Right lobe of liver (tissue), 6 donors: ENCODE measurements at regions of chr11 and their contacts with region 1.

Region 1: GRCh38 chr11:1694064-1694845 is 2.7 kb upstream of the KRTAP5-6 start:
- DNase-seq: peak; percentile 91 to 93 (median 92)
- ATAC-seq: peak; percentile 47 to 66 (median 61)
- H3K4me3 ChIP-seq: peak overlapping the region in 2 of 3 donors; percentile 26 to 48
- H3K27ac ChIP-seq: peak overlapping the region; percentile 45 to 90 (median 90)
- H3K4me1 ChIP-seq: peaks cover 0 to 39% (median 18%) of the 10 kb centered on the region in 4 donors
- H3K27me3 ChIP-seq: no peaks in the 10 kb centered on the region
- CTCF ChIP-seq: peak; percentile 95 to 97 (median 96)
- POLR2A ChIP-seq: no peak

Region 2: DNA sequence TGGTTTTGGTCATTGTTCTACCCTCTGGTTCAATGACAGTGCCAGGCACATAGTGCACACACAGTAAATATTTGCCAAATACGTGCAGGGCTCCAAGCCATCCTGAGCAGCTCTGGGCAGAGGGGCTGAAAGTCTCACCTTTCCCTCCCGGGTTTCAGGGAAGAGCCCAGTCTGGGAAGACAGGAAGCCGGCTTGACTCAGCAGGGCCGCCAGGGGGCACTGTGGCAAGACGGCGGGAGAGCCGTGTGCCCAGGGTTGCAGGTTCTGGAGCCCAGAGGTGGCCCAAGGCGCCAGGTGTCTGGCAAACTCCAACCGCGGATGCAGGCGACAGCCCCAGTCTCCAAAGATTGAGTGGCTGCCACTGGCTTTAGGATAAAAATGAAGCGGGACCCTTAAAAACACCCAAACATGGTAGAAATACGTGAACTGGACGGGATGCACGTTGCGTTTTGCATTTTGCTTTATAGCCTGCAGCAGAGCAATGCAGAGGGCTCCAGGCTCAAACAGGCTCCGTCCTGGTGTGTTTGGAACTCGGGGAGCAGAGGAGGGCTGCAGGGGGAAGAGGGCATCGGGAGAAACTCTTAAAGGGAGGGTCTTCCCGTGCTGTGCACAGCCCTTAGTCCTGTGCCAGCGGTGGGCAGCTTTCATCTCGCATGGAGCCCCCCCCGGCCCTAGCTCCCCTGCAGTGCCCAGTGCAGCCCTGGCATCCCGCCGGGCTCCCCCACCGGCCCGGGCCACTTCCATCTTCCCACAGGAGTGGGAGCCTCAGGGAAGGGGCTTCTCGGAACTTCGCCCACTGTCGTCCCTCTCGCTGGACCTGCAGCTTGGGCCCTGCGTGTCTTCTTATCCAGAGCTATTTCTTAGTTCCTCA is 53.9 kb before region 1 on chr11:
- intact Hi-C with region 1: no loop called
- DNase-seq: peak; percentile 55 to 68 (median 61)
- ATAC-seq: peak; percentile 84 to 92 (median 90)
- H3K4me3 ChIP-seq: no peak overlapping the region
- H3K27ac ChIP-seq: no peak overlapping the region
- H3K4me1 ChIP-seq: no peaks in the 10 kb centered on the region
- H3K27me3 ChIP-seq: no peaks in the 10 kb centered on the region
- CTCF ChIP-seq: peak; percentile 66 to 93 (median 88)
- POLR2A ChIP-seq: no peak

Region 3: DNA sequence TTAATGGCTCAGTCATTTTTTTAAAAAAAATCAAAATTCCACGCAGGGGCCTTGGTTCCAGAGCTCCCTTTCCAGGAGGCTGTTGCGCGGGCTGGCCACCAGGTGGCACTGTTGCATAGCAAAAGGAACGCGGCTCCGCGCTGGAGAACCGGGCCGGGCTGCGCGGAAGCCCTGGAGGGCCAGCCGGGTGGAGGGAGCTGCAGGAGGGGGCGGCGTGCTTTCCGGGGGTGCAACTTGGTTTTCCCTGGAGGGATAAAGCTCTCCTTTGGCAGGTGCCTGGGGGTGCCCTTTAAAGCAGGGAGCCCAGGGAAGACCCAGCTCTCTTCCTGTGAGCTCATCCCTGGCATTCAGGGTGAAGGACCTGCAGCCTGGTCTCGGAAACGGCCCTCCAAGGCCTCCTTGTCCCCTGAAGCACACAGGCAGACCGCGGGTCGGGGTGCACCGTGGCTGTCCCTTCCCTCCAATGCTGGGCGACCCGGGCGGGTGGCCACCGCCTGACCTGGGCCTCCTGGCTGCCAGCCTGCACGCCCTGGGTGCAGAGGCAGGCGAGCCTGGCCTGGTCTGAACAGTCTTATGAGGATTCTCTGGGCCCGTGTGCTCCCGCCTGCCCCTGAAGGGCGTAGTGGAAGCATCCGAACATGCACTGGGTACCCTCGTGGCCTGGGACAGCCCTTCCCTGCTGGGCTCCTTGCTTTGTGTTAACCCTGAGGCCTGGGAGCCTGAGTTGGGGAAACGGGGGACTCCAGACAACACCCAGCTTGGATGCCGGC is 41.3 kb before region 1 on chr11:
- intact Hi-C with region 1: loop called in 1 of 2 experiments (anchors 5 kb)
- DNase-seq: peak; percentile 82 to 85 (median 83)
- ATAC-seq: peak; percentile 68 to 86 (median 76)
- H3K4me3 ChIP-seq: peak overlapping the region in 1 of 3 donors; percentile 13
- H3K27ac ChIP-seq: peak overlapping the region; percentile 47 to 88 (median 49)
- H3K4me1 ChIP-seq: peaks cover 0 to 38% (median 22%) of the 10 kb centered on the region in 4 donors
- H3K27me3 ChIP-seq: no peaks in the 10 kb centered on the region
- CTCF ChIP-seq: peak; percentile 94 to 99 (median 98)
- POLR2A ChIP-seq: no peak

Region 4: DNA sequence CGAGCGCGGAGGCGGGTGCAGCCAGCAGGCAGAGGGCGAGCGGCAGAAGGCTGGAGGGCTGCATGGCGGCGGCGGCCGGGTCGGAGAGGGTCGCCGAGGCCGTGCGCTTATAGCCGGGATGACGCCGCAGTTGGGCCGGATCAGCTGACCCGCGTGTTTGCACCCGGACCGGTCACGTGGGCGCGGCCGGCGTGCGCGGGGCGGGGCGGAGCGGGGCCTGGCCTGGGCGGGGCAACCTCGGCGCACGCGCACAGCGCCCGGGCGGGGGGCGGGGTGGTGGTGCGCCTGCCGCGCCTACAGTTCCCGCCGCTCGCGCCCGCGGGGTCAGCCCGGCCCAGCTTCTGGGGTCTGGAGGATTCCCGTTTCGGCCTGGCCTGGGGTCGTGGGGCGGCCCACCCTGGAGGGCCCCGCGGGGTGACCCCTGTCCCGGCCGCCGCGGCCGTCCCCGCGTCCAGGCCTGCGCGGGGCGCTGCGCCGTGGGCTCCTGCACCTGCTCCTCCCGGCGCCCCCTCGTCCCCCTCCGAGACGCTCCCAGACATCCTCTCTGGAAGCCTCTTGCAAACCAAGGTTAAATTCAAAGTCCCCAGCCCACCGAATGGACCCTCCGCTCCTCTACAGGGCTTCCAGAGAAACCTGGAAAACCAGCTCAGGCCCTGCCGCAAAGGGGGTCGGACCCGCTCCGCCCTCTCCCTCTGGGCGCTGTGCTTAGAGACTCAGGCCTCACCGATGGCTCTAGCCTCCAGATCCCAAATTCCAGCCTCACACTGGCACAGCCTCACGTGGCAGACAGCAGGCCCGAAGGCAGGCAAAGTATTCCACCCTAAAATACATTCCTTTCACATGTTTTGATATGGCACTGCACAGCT is 69.8 kb after region 1 on chr11 and contains the start of gene CTSD:
- intact Hi-C with region 1: no loop called
- DNase-seq: peak; percentile 94 to 95 (median 94)
- ATAC-seq: peak; percentile 44 to 69 (median 63)
- H3K4me3 ChIP-seq: peak within 1 kb of the TSS; percentile 79 to 98 (median 97)
- H3K27ac ChIP-seq: peak within 1 kb of the TSS; percentile 82 to 99 (median 97)
- H3K4me1 ChIP-seq: peaks cover 0 to 37% (median 16%) of the 10 kb centered on the region in 4 donors
- H3K27me3 ChIP-seq: no peaks in the 10 kb centered on the region
- CTCF ChIP-seq: peak in 1 of 4 donors; percentile 4
- POLR2A ChIP-seq: peak; percentile 85
- total RNA-seq, gene CTSD: 515 to 1,549 (median 1,009) TPM

Region 5: GRCh38 chr11:1827095-1827813 is 133.0 kb after region 1 on chr11:
- intact Hi-C with region 1: loop called (anchors 2 to 5 kb)
- DNase-seq: peak in 2 of 3 donors; percentile 68 to 77
- ATAC-seq: peak; percentile 37 to 57 (median 48)
- H3K4me3 ChIP-seq: no peak overlapping the region
- H3K27ac ChIP-seq: peak overlapping the region in 1 of 3 donors; percentile 22
- H3K4me1 ChIP-seq: peaks cover 0 to 23% (median 9%) of the 10 kb centered on the region in 4 donors
- H3K27me3 ChIP-seq: no peaks in the 10 kb centered on the region
- CTCF ChIP-seq: peak in 1 of 4 donors; percentile 6
- POLR2A ChIP-seq: no peak

Region 6: GRCh38 chr11:1832211-1832919 is 138.1 kb after region 1 on chr11:
- intact Hi-C with region 1: loop called (anchors 2 to 5 kb)
- DNase-seq: peak in 2 of 3 donors; percentile 65 to 72
- ATAC-seq: peak; percentile 58 to 73 (median 66)
- H3K4me3 ChIP-seq: peak overlapping the region in 2 of 3 donors; percentile 19 to 31
- H3K27ac ChIP-seq: no peak overlapping the region
- H3K4me1 ChIP-seq: peaks cover 0 to 20% (median 7%) of the 10 kb centered on the region in 4 donors
- H3K27me3 ChIP-seq: no peaks in the 10 kb centered on the region
- CTCF ChIP-seq: peak; percentile 97 to 98 (median 98)
- POLR2A ChIP-seq: no peak

Region 7: DNA sequence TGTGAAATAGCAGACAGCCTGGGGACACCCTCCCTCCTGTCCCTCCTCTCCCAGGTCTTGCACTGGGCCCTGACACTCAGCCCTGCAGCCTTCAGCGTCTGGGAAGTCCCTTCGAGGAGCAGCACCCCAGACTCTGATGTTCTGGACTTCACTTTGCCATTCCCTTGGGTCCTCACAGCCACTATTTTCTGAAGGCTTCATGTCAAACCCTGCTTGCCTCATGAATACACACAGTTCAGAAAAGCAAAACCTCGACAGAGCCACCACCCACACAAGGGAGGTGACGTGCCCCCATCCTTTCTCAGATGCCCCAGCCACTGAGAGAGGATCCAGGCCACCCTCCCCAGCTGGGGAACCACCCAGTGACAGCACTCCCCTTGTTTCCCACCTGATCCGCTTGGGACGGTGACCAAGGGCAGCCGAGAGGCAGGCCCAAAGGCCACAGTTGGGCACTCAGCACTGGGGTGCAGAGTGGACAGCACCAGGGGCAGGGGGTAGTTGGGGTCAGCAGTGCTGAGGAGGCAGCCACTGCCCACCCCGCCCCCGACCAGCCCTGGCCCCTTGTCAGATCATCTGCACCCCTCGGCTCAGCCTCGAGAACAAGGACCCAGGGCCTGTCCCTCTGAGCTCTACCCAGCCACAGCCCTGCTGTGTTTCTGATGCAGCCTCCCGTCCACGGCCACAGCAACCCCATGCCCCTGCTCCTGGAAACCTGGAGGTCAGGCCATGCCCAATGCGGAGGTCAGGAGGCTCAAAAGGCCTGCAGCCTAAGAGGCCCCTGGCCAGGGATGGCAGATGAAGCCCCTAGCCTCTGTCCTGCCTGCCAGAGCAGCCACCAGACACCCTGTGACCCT is 222.1 kb after region 1 on chr11:
- intact Hi-C with region 1: no loop called
- DNase-seq: peak in 1 of 3 donors; percentile 42
- ATAC-seq: no peak
- H3K4me3 ChIP-seq: no peak overlapping the region
- H3K27ac ChIP-seq: no peak overlapping the region
- H3K4me1 ChIP-seq: no peaks in the 10 kb centered on the region
- H3K27me3 ChIP-seq: no peaks in the 10 kb centered on the region
- CTCF ChIP-seq: no peak
- POLR2A ChIP-seq: no peak